Esophagus muscularis mucosa (tissue), 4 donors: ENCODE measurements at regions of chr14 and their contacts with region 1.

Region 1: GRCh38 chr14:99563233-99564129 is 40.5 kb downstream of the CCDC85C start:
- DNase-seq: no peak
- H3K4me3 ChIP-seq: peak overlapping the region in 1 of 4 donors; percentile 8
- H3K27ac ChIP-seq: peak overlapping the region; percentile 88 to 90 (median 90)
- H3K4me1 ChIP-seq: peaks cover 73 to 100% (median 99%) of the 10 kb centered on the region in 4 donors
- H3K27me3 ChIP-seq: no peaks in the 10 kb centered on the region
- CTCF ChIP-seq: peak; percentile 18 to 41 (median 30)
- EP300 ChIP-seq: no peak
- POLR2A ChIP-seq: no peak

Region 2: DNA sequence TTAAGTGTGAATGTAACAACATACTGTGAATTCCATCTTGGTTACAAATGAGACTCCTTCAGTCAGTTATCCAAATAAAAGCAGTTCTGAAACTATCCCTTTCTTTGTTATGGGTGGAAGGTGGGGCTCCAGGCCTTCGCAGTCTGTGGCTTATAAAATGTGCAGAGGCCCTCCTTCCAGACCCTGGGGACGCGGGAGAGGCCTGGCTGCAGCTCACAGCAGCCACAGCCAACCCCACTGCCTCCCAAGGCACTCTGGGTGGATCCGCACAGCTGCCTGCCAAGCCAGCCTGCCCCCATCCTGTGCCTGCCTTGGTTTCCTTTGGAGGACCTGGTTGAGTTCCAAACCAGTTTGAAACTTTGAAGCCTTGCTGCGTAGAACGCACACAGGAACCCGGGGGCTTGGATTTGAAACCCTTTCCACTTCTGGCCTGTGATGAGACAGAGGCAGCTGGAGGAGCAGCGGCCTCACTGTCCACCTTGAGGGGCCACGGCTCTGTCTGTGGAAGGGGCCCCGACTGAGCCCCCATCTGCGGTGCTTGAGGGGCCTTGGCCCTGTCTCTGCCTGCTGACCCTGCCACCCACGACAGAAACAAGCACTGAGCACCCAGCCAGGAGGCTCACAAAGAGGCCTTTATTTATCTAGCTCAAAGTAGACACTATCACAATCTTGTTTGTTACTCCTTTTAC is 51.9 kb before region 1 on chr14:
- intact Hi-C with region 1: no loop called
- DNase-seq: no peak
- H3K4me3 ChIP-seq: no peak overlapping the region
- H3K27ac ChIP-seq: peak overlapping the region; percentile 72 to 88 (median 79)
- H3K4me1 ChIP-seq: peaks cover 7 to 55% (median 31%) of the 10 kb centered on the region in 4 donors
- H3K27me3 ChIP-seq: no peaks in the 10 kb centered on the region
- CTCF ChIP-seq: no peak
- EP300 ChIP-seq: no peak
- POLR2A ChIP-seq: no peak

Region 3: GRCh38 chr14:99524804-99525698 is 38.4 kb before region 1 on chr14:
- intact Hi-C with region 1: loop called (anchors 5 kb)
- DNase-seq: no peak
- H3K4me3 ChIP-seq: no peak overlapping the region
- H3K27ac ChIP-seq: peak overlapping the region; percentile 77 to 84 (median 83)
- H3K4me1 ChIP-seq: peaks cover 44 to 80% (median 55%) of the 10 kb centered on the region in 4 donors
- H3K27me3 ChIP-seq: no peaks in the 10 kb centered on the region
- CTCF ChIP-seq: peak; percentile 42 to 49 (median 47)
- EP300 ChIP-seq: no peak
- POLR2A ChIP-seq: no peak

Region 4: DNA sequence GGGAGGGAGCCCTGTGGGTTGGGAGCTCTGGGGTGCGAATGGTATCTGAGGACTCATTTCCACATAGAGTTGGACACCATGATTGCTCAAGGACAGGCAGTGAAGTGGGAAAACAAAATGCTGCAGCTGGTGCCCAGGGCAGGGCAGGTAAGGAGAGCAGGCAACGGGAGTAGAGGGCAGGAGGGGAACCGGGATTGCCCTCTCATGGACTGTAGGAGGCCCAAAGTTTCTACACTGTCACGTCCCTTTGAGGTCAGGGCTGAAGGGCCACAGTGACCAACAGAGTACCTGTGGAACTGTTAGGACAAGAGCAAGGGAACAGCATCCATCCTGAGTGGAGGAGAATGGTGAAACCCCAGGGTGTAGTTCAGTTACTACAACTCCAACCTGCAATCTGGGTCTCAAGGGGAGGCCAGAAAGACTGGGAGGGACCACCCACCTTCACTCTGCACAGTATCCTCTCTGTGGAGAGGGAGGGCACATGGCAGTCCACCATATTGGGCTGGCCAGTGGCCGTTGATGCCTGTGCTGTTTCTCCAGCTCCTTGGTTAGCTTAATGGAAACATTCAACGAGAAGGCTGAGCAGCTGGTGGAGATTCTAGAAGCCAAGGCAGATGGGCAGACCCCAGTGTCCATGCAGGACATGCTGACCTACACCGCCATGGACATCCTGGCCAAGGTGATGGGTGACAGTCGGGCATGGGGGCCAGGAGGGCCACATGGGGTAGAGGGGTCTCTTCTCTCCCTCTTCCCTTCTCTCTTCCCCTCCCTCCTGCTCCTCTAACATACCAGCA is 142.8 kb after region 1 on chr14:
- intact Hi-C with region 1: no loop called
- DNase-seq: peak; percentile 37
- H3K4me3 ChIP-seq: no peak overlapping the region
- H3K27ac ChIP-seq: no peak overlapping the region
- H3K4me1 ChIP-seq: no peaks in the 10 kb centered on the region
- H3K27me3 ChIP-seq: no peaks in the 10 kb centered on the region
- CTCF ChIP-seq: no peak
- EP300 ChIP-seq: no peak
- POLR2A ChIP-seq: no peak